Caco-2 (cell line): ENCODE measurements at regions of chr1 and their contacts with region 1.

Region 1: DNA sequence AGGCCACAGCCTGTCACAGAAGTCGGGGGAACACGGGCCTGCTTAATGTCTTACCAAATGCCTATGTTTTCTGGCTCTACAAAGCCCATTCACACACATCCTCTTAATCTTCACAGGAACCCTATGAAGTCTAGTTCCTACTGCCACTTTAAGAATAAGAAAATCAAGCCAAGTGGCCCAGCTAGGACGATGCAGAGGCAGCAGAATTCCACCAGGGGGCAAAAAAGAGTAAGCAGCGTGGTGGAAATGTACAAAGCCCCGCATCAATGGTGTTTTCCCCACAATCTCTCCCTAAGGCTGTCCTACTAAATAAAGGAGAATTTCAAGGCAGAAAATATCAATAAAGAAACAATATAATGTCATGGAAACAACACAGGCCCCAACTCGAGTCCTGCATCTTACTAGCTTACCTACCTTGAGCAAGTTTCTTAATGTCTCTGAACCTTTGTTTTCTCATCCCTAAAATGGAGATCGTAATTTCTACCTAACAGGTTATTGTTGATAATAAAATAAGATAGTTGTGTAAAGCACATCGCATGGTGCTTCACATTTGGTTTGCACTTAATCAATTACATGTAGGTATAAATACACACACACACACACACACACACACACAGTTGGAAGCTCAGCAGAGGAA is 21.4 kb downstream of the SEC16B start:
- DNase-seq: peak; percentile 58 to 64
- H3K4me3 ChIP-seq: no peak overlapping the region
- H3K4me3 Mint-ChIP-seq: no peak overlapping the region
- H3K27ac Mint-ChIP-seq: no peak overlapping the region
- H3K4me1 ChIP-seq: no peaks in the 10 kb centered on the region
- H3K4me1 Mint-ChIP-seq: no peaks in the 10 kb centered on the region
- H3K27me3 ChIP-seq: no peaks in the 10 kb centered on the region
- H3K27me3 Mint-ChIP-seq: peaks cover 4% of the 10 kb centered on the region
- CTCF ChIP-seq: peak; percentile 91 to 93

Region 2: DNA sequence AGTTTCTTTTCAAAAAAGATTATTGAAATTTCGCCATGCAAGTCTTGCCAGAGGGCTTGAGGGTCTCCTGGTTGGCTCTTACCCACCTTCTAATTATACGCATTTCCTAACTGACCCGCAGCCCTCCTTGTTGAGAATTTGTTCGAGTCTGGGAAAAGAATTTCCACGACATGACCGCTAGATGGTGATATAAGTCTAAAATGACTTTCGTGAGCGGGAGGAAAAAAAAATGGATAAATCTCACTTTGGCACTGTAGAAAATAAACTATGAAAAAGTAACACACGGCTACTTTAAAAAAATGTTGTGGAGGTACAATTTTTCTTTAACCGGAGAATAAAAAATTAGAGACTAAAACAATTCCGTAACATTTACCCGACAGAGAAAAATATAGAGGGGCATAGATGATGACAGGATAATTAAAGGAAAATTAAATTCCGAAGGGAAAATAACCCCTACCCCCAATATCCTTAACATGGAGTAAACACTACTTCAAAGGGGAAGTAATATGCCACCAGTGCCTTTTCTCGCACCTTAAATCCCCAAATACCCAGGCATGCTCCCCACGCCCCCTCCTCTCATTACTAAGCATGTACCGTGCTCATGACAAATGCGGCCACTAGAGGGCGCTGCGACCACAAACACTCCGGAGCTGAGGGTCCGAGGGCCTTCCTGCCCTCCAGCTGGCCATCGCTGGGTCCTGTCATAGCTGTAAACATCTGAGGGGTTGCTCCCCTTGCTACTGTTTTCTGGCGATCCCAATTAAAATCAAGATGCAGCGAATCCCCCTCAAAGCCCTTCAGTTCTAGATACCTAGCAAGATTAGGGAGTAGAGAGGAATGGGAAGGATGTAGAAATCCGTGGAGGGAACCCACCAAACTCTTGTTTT is 1050.9 kb before region 1 on chr1:
- CTCF ChIA-PET with region 1: interaction called, 10 read pairs
- POLR2A ChIA-PET with region 1: no interaction called
- intact Hi-C with region 1: loop called (anchors 2 kb)
- DNase-seq: peak; percentile 53 to 59
- H3K4me3 ChIP-seq: no peak overlapping the region
- H3K4me3 Mint-ChIP-seq: no peak overlapping the region
- H3K27ac Mint-ChIP-seq: no peak overlapping the region
- H3K4me1 ChIP-seq: no peaks in the 10 kb centered on the region
- H3K4me1 Mint-ChIP-seq: peaks cover 7% of the 10 kb centered on the region
- H3K27me3 ChIP-seq: no peaks in the 10 kb centered on the region; the same call in none of the 2 replicates
- H3K27me3 Mint-ChIP-seq: peaks cover 17% of the 10 kb centered on the region
- CTCF ChIP-seq: peak; percentile 65 to 70

Region 3: GRCh38 chr1:177181631-177182291 is 766.7 kb before region 1 on chr1:
- CTCF ChIA-PET with region 1: no interaction called
- POLR2A ChIA-PET with region 1: no interaction called
- intact Hi-C with region 1: loop called (anchors 5 kb)
- DNase-seq: peak; percentile 66 to 81
- H3K4me3 ChIP-seq: no peak overlapping the region
- H3K4me3 Mint-ChIP-seq: peak overlapping the region; percentile 55
- H3K27ac Mint-ChIP-seq: no peak overlapping the region
- H3K4me1 ChIP-seq: no peaks in the 10 kb centered on the region
- H3K4me1 Mint-ChIP-seq: peaks cover 8% of the 10 kb centered on the region
- H3K27me3 ChIP-seq: no peaks in the 10 kb centered on the region; the same call in 1 of the 2 replicates
- H3K27me3 Mint-ChIP-seq: peaks cover 15% of the 10 kb centered on the region
- CTCF ChIP-seq: peak; percentile 79 to 85

Region 4: GRCh38 chr1:177495890-177496289 is 452.6 kb before region 1 on chr1:
- CTCF ChIA-PET with region 1: no interaction called
- POLR2A ChIA-PET with region 1: no interaction called
- intact Hi-C with region 1: loop called (anchors 10 kb)
- DNase-seq: peak in 1 of 2 experiments; percentile 3
- H3K4me3 ChIP-seq: no peak overlapping the region
- H3K4me3 Mint-ChIP-seq: no peak overlapping the region
- H3K27ac Mint-ChIP-seq: no peak overlapping the region
- H3K4me1 ChIP-seq: no peaks in the 10 kb centered on the region
- H3K4me1 Mint-ChIP-seq: no peaks in the 10 kb centered on the region
- H3K27me3 ChIP-seq: no peaks in the 10 kb centered on the region
- H3K27me3 Mint-ChIP-seq: no peaks in the 10 kb centered on the region
- CTCF ChIP-seq: peak in 1 of 2 experiments; percentile 40

Region 5: DNA sequence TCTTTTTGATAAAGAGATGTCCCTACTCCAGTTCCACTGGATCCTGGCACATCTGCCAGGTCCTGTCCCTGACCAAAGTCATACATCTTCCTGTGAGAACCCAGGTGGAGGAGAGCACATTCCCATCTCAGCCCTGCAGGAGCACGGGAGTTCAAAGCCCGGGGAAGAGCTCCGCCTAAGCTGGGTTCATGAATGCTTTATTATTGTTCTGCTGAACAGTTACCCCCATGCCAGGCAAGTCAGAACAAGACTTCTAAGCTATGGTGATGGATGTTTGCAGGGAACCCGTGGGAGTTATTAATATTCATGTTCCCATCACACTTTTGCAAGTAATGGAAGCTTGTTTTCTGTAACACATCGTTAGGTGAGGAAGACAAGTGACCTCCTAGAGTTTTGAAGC is 41.5 kb before region 1 on chr1:
- CTCF ChIA-PET with region 1: no interaction called
- POLR2A ChIA-PET with region 1: no interaction called
- intact Hi-C with region 1: no loop called
- DNase-seq: no peak
- H3K4me3 ChIP-seq: no peak overlapping the region
- H3K4me3 Mint-ChIP-seq: no peak overlapping the region
- H3K27ac Mint-ChIP-seq: no peak overlapping the region
- H3K4me1 ChIP-seq: no peaks in the 10 kb centered on the region
- H3K4me1 Mint-ChIP-seq: no peaks in the 10 kb centered on the region
- H3K27me3 ChIP-seq: no peaks in the 10 kb centered on the region
- H3K27me3 Mint-ChIP-seq: peaks cover 6% of the 10 kb centered on the region
- CTCF ChIP-seq: no peak

Region 6: DNA sequence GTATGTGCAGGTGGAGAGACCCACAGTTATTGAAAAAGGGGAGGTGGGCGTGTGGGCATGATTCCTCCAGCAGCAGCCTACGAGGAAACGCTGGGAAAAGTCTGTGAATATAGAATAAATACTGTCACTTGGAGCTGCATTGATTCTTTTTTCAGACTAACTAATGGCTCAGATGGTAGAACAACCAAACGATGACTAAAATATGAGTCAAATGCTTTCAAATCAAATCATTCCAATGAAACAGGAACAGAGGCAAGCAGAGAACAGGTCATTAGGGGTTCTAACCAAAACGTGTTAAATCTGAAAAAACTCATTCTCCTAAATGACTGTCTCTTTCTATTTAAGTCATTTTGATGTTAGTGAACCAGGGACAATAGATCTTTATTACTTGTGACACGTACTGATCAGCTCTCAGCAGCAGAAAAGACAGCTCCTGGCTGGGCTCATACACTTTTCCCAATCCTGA is 56.5 kb after region 1 on chr1:
- CTCF ChIA-PET with region 1: no interaction called
- POLR2A ChIA-PET with region 1: no interaction called
- intact Hi-C with region 1: no loop called
- DNase-seq: no peak
- H3K4me3 ChIP-seq: no peak overlapping the region
- H3K4me3 Mint-ChIP-seq: no peak overlapping the region
- H3K27ac Mint-ChIP-seq: no peak overlapping the region
- H3K4me1 ChIP-seq: no peaks in the 10 kb centered on the region
- H3K4me1 Mint-ChIP-seq: peaks cover 10% of the 10 kb centered on the region
- H3K27me3 ChIP-seq: no peaks in the 10 kb centered on the region; the same call in 1 of the 2 replicates
- H3K27me3 Mint-ChIP-seq: peaks cover 7% of the 10 kb centered on the region
- CTCF ChIP-seq: no peak

Region 7: DNA sequence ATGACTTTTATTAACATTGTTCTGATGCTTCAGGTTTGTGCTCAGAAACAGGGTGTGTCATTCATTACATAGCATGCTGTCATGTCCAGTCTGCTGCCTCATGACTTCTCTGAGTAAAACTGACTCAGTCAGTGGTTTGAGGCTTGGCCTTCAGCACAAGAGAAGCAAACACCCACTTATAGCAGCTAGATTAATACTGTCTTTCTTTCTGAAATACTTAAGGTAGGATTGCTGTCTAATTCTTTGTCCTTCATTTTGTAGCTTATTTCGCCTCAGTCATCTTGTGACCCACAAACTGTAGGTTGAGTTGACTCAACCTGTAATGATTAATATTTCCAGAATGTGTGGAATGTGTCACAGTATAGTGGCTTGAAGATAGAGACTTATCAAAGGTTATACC is 178.3 kb after region 1 on chr1:
- CTCF ChIA-PET with region 1: no interaction called
- POLR2A ChIA-PET with region 1: no interaction called
- intact Hi-C with region 1: no loop called
- DNase-seq: peak; percentile 49 to 57
- H3K4me3 ChIP-seq: no peak overlapping the region; the same call in 1 of the 2 replicates
- H3K4me3 Mint-ChIP-seq: peak overlapping the region; percentile 65
- H3K27ac Mint-ChIP-seq: peak overlapping the region; percentile 96
- H3K4me1 ChIP-seq: peaks cover 59% of the 10 kb centered on the region
- H3K4me1 Mint-ChIP-seq: peaks cover 6% of the 10 kb centered on the region
- H3K27me3 ChIP-seq: no peaks in the 10 kb centered on the region
- H3K27me3 Mint-ChIP-seq: no peaks in the 10 kb centered on the region
- CTCF ChIP-seq: no peak

Region 8: GRCh38 chr1:178189814-178190213 is 241.4 kb after region 1 on chr1:
- CTCF ChIA-PET with region 1: no interaction called
- POLR2A ChIA-PET with region 1: no interaction called
- intact Hi-C with region 1: loop called (anchors 1 kb)
- DNase-seq: peak; percentile 60 to 62
- H3K4me3 ChIP-seq: no peak overlapping the region
- H3K4me3 Mint-ChIP-seq: no peak overlapping the region
- H3K27ac Mint-ChIP-seq: no peak overlapping the region
- H3K4me1 ChIP-seq: peaks cover 10% of the 10 kb centered on the region
- H3K4me1 Mint-ChIP-seq: peaks cover 19% of the 10 kb centered on the region
- H3K27me3 ChIP-seq: no peaks in the 10 kb centered on the region
- H3K27me3 Mint-ChIP-seq: no peaks in the 10 kb centered on the region
- CTCF ChIP-seq: peak; percentile 72 to 77